CD4-positive, alpha-beta memory T cell (primary cell): ENCODE measurements at regions of chr4 and their contacts with region 1.

Region 1: DNA sequence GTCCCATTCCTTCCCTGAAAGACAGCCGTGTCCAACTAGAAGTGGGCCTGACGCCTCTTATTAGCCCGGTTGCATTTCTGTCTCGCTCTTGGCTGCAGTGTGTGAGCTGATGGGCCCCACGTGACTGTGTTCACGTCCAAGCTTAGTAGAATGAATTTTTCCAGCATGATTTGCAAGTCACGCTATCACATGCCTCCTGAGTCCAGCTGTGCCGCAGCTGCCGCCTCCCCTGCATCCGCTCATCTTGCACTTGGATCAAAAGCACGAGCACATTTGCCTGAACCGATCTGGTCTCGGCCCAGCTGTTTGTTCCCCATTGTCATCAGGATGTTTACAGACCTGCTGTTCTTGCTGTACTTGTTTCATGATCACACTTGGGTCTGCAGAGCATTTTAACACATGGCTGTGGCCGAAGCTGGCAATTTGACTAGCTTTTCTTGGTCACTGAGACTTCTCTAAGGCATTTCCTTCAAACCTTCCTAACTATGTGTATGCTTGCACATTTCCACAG is 126.5 kb downstream of the KIT start:
- DNase-seq: no peak
- H3K4me3 ChIP-seq: no peak overlapping the region
- H3K4me3 Mint-ChIP-seq: no peak overlapping the region
- H3K27ac ChIP-seq: no peak overlapping the region
- H3K27ac Mint-ChIP-seq: peak overlapping the region in 1 of 7 donors; percentile 13
- H3K4me1 ChIP-seq: no peaks in the 10 kb centered on the region
- H3K4me1 Mint-ChIP-seq: peaks cover 0 to 7% (median 4%) of the 10 kb centered on the region in 4 donors
- H3K27me3 ChIP-seq: no peaks in the 10 kb centered on the region
- H3K27me3 Mint-ChIP-seq: no peaks in the 10 kb centered on the region

Region 2: DNA sequence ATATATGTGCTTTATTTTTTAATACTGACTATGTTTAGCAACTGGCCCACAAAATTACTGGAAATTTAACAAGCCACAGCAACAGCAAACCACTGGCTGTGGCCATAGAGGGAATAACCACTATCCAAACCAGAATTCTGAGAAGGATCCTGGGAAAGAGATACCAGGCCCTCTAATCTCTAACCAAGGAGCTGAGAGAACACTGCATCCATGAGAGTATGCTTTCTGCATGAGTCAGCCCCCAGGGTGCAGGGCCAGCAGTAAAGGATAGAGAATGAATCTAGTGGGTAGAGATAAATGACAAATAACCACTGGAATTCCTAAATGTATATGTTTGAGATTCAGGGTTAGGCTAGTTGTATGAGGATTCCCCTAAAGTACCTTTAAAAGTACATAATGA is 95.4 kb after region 1 on chr4:
- CTCF ChIA-PET with region 1: no interaction called
- POLR2A ChIA-PET with region 1: no interaction called
- intact Hi-C with region 1: loop called (anchors 10 kb)
- DNase-seq: no peak
- H3K4me3 ChIP-seq: no peak overlapping the region
- H3K4me3 Mint-ChIP-seq: no peak overlapping the region
- H3K27ac ChIP-seq: no peak overlapping the region
- H3K27ac Mint-ChIP-seq: no peak overlapping the region
- H3K4me1 ChIP-seq: no peaks in the 10 kb centered on the region
- H3K4me1 Mint-ChIP-seq: no peaks in the 10 kb centered on the region
- H3K27me3 ChIP-seq: no peaks in the 10 kb centered on the region
- H3K27me3 Mint-ChIP-seq: no peaks in the 10 kb centered on the region

Region 3: DNA sequence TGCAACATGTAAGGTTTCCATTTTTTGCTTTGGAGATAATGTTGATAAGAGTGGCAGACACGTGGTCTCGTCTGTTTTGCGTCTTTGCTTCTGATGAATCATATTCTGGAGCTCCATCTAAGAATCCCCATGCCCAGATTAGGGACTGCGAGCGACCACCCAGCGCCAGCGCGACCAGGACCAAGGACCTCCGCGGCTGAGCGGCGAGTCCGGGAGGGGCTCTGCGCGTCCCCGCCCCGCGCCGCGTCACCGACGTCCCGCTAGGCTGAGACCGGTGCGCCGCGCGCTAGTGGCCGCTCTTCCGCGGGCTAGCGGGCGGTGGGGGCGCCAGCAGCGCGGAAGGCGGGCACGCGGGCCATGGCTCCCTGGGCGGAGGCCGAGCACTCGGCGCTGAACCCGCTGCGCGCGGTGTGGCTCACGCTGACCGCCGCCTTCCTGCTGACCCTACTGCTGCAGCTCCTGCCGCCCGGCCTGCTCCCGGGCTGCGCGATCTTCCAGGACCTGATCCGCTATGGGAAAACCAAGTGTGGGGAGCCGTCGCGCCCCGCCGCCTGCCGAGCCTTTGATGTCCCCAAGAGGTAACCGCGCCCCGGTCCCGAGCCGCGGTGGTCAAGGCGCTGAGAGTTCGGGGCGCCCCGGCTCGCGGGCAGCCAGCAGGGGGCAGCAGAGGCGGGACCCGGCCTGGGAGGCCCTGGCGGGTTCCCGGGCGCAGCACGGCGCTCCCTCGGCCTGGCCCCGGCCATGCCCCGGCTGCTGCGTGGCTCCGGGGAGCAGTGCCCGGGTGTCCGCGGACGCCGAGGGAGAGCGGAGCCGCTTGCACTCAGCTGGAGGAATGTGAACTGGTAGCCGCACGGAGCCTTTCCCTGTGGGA is 562.0 kb after region 1 on chr4 and contains the start of gene SRD5A3:
- CTCF ChIA-PET with region 1: no interaction called
- POLR2A ChIA-PET with region 1: no interaction called
- intact Hi-C with region 1: no loop called
- DNase-seq: peak; percentile 67 to 81 (median 74)
- H3K4me3 ChIP-seq: peak within 1 kb of the TSS; percentile 37 to 74
- H3K4me3 Mint-ChIP-seq: peak within 1 kb of the TSS; percentile 87 to 93 (median 89)
- H3K27ac ChIP-seq: peak within 1 kb of the TSS; percentile 57
- H3K27ac Mint-ChIP-seq: peak within 1 kb of the TSS; percentile 45 to 93 (median 90)
- H3K4me1 ChIP-seq: peaks cover 20% of the 10 kb centered on the region
- H3K4me1 Mint-ChIP-seq: peaks cover 10 to 19% (median 14%) of the 10 kb centered on the region in 4 donors
- H3K27me3 ChIP-seq: no peaks in the 10 kb centered on the region
- H3K27me3 Mint-ChIP-seq: no peaks in the 10 kb centered on the region
- total RNA-seq, gene SRD5A3: 2.9 to 3.5 TPM